Endothelial cell of umbilical vein (primary cell): ENCODE measurements at regions of chr22 and their contacts with region 1.

Region 1: GRCh38 chr22:43014869-43015676 is at the start of gene PACSIN2:
- DNase-seq: peak; percentile 98
- H3K4me3 ChIP-seq: peak within 1 kb of the TSS; percentile 72 to 96 (median 81)
- H3K27ac ChIP-seq: peak within 1 kb of the TSS; percentile 40
- H3K4me1 ChIP-seq: peaks cover 17% of the 10 kb centered on the region
- H3K27me3 ChIP-seq: peaks cover 0 to 1% of the 10 kb centered on the region in 2 experiments
- CTCF ChIP-seq: no peak
- POLR2A ChIP-seq: peak; percentile 81
- total RNA-seq, gene PACSIN2: 63.9 and 64.5 TPM in 2 replicates

Region 2: GRCh38 chr22:42880815-42881214 is 134.3 kb before region 1 on chr22:
- CTCF ChIA-PET with region 1: no interaction called
- POLR2A ChIA-PET with region 1: no interaction called
- dilution Hi-C with region 1: no loop called
- intact Hi-C with region 1: no loop called
- DNase-seq: no peak
- H3K4me3 ChIP-seq: no peak overlapping the region
- H3K27ac ChIP-seq: no peak overlapping the region
- H3K4me1 ChIP-seq: no peaks in the 10 kb centered on the region
- H3K27me3 ChIP-seq: no peaks in the 10 kb centered on the region
- CTCF ChIP-seq: peak in 1 of 2 donors; percentile 23
- POLR2A ChIP-seq: no peak

Region 3: DNA sequence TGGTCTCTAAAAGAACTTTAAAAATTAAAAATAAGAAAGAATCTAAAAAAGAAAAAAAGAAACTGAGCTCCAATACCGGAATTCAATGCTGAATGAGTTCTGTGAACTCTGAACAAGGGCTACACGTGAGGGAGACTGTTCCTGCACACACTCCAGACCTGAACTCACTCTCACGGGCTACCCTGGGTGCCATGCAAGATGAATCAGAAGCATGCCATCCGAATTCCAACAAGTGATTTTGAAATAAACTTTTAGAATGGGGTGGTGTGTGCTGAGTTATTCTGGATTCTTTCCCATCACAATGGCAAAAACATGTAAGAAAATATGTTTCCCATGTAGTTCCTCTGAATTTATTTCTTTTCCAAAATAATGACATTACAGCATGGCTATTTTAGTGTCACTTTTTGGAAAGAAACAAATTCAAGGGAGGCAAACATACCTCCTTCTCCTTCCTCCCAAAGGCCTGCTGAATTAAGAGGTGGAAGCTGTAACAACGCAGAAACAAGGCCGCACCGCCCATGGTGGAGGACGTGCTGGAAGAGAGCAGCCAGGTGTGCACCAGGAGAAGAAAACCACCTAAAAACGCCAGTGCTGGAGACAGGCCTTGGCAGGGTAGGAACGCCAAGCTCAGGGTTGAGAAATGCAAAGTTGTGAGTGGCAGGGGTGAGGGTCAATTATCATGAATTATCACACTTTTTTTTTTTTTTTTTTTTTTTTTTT is 94.8 kb before region 1 on chr22:
- CTCF ChIA-PET with region 1: no interaction called
- POLR2A ChIA-PET with region 1: no interaction called
- dilution Hi-C with region 1: no loop called
- intact Hi-C with region 1: loop called (anchors 5 kb)
- DNase-seq: no peak
- H3K4me3 ChIP-seq: no peak overlapping the region
- H3K27ac ChIP-seq: no peak overlapping the region
- H3K4me1 ChIP-seq: peaks cover 14% of the 10 kb centered on the region
- H3K27me3 ChIP-seq: no peaks in the 10 kb centered on the region
- CTCF ChIP-seq: no peak
- POLR2A ChIP-seq: no peak

Region 4: DNA sequence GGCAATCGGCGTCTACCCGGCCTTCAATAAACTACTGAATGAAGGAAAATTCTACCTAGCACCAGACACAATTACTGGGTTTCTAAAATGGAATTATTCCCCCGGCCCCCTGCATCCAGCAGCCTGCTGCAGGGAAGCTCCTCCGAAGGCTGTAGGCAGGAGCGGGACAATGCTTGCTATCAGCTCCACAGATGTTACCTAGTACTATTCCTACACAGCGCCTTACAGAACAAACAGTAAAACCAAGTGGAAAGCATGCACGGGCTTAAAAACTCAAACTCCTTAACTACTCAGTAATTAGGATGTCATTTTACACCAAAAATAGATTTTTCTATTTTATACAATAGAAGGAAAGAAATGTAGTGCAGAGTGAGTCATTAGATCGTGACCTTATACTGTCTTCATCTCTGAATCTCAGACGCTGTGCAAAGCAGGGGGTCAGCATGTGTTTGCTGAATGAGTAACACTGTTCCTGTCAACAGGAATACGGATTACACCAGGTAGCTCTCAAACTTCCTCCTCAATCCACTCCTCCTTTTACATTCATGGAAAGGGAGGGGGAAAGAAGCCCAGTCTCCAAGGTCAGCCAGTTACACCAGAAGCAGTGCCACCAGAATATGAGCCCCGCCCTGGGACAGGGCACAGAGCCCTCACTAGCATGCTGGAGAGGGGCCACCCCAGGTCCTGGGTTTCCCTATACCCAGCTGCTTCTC is 75.0 kb before region 1 on chr22:
- CTCF ChIA-PET with region 1: interaction called, 3 read pairs
- POLR2A ChIA-PET with region 1: interaction called, 6 read pairs
- dilution Hi-C with region 1: no loop called
- intact Hi-C with region 1: loop called (anchors 2 kb)
- DNase-seq: peak; percentile 95
- H3K4me3 ChIP-seq: peak overlapping the region in 1 of 3 experiments; percentile 13
- H3K27ac ChIP-seq: peak overlapping the region; percentile 91
- H3K4me1 ChIP-seq: peaks cover 38% of the 10 kb centered on the region
- H3K27me3 ChIP-seq: no peaks in the 10 kb centered on the region
- CTCF ChIP-seq: no peak
- POLR2A ChIP-seq: no peak

Region 5: DNA sequence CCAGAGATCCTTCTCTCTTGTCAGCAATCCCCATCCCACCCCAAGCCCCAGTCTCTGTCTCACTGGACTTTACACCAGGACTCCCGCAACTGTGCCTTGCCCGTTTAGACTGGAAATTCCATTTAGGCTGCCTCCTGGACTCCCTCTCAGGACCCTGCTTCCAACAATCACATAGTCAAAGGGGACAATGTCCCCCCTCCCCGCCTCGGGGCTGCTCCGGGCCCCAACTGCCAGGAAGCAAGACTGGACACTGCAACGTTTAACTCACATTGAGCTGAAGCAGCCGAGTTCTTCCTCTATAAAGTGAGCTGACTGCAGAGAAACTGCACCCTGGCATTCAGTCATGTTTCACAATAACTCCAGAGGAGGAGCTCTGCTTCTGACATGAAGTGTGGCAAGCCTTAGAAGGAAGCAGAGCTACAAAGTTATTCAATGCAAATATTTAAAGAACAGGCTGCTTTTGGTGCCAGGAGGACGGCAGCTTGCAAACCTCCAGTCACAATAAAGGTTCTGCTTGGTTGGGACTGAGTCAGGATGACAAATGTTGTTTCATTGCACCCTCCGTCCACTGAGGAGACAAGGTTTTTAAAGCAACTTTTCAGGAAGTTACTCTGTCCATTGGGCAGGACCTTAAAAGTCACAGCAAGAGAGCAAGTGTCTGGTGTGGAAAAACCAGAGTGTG is 20.1 kb before region 1 on chr22:
- CTCF ChIA-PET with region 1: interaction called, 24 read pairs
- POLR2A ChIA-PET with region 1: interaction called, 5 read pairs
- dilution Hi-C with region 1: no loop called
- intact Hi-C with region 1: no loop called
- DNase-seq: peak; percentile 66
- H3K4me3 ChIP-seq: no peak overlapping the region
- H3K27ac ChIP-seq: no peak overlapping the region
- H3K4me1 ChIP-seq: peaks cover 35% of the 10 kb centered on the region
- H3K27me3 ChIP-seq: no peaks in the 10 kb centered on the region
- CTCF ChIP-seq: no peak
- POLR2A ChIP-seq: no peak

Region 6: GRCh38 chr22:43036282-43036829 is 21.3 kb after region 1 on chr22:
- CTCF ChIA-PET with region 1: interaction called, 23 read pairs
- POLR2A ChIA-PET with region 1: interaction called, 6 read pairs
- dilution Hi-C with region 1: no loop called
- intact Hi-C with region 1: no loop called
- DNase-seq: peak; percentile 81
- H3K4me3 ChIP-seq: no peak overlapping the region
- H3K27ac ChIP-seq: no peak overlapping the region
- H3K4me1 ChIP-seq: no peaks in the 10 kb centered on the region
- H3K27me3 ChIP-seq: no peaks in the 10 kb centered on the region
- CTCF ChIP-seq: no peak
- POLR2A ChIP-seq: no peak

Region 7: DNA sequence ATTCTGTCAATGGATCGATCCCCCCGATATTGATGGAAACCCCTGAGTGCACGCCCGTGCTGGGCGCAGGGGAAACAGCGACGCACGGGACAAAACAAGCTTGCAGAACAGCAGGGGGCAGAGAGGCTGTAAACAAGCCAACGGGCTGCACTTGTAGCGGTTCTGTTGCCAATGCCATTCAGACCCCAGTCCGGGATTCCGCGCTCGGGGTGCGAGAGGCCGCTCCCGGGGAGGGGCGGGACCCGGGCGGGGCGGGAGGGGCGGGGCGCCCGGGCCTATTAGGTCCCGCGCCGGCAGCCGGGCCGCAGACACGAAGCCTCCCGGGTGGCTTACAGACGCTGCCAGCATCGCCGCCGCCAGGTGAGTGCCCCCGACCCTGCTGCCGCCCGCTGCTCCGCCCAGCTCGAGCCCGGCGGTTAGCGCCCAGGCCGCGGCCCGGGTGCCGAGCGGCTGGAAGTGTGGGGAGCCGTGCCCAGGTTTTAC is 95.4 kb after region 1 on chr22 and contains the start of gene BIK:
- CTCF ChIA-PET with region 1: no interaction called
- POLR2A ChIA-PET with region 1: no interaction called
- dilution Hi-C with region 1: no loop called
- intact Hi-C with region 1: no loop called
- DNase-seq: peak; percentile 47
- H3K4me3 ChIP-seq: peak within 1 kb of the TSS; percentile 19 to 51 (median 50)
- H3K27ac ChIP-seq: no peak within 1 kb of the TSS
- H3K4me1 ChIP-seq: no peaks in the 10 kb centered on the region
- H3K27me3 ChIP-seq: peaks cover 16 to 26% of the 10 kb centered on the region in 2 experiments
- CTCF ChIP-seq: peak; percentile 19 to 53
- POLR2A ChIP-seq: no peak
- total RNA-seq, gene BIK: 0.49 TPM in 1 of 2 replicates, not detected in the other